ENCODE measurements at regions of chr3 and their contacts with region 1.

Region 1: GRCh38 chr3:122324871-122325323 is at the start of gene CSTA:
- DNase-seq: no peak
- ATAC-seq: no peak
- H3K4me3 ChIP-seq: no peak within 1 kb of the TSS
- H3K27ac ChIP-seq: no peak within 1 kb of the TSS
- H3K4me1 ChIP-seq: no peaks in the 10 kb centered on the region
- H3K27me3 ChIP-seq: no peaks in the 10 kb centered on the region
- CTCF ChIP-seq: no peak
- total RNA-seq, gene CSTA: not detected

Region 2: DNA sequence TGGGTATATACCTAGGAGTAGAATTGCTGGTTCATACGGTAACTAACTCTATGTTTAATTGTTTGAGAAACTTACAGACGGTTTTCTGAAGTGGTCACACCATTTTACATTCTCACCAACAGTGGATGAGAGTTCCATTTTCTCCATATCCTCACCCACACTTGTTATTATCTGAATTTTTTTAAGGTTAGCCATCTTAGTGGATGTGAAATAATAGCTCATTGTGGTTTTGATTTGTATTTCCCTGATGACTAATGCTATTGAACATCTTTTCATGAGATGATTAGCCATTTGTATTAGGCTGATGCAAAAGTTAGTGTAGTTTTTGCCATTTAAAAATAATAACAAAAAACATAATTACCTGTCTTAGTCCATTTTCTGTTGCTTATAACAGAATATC is 18.8 kb after region 1 on chr3:
- CTCF ChIA-PET with region 1: interaction called, 10 read pairs
- POLR2A ChIA-PET with region 1: no interaction called
- in situ Hi-C with region 1: no loop called
- intact Hi-C with region 1: no loop called
- DNase-seq: no peak
- ATAC-seq: no peak
- H3K4me3 ChIP-seq: no peak overlapping the region
- H3K27ac ChIP-seq: no peak overlapping the region
- H3K4me1 ChIP-seq: no peaks in the 10 kb centered on the region
- H3K27me3 ChIP-seq: no peaks in the 10 kb centered on the region
- CTCF ChIP-seq: no peak

Region 3: GRCh38 chr3:122365073-122365472 is 40.2 kb after region 1 on chr3:
- CTCF ChIA-PET with region 1: no interaction called
- POLR2A ChIA-PET with region 1: no interaction called
- in situ Hi-C with region 1: no loop called
- intact Hi-C with region 1: loop called (anchors 2 kb)
- DNase-seq: no peak
- ATAC-seq: peak; percentile 5; the same call in 1 of the 2 replicates
- H3K4me3 ChIP-seq: no peak overlapping the region
- H3K27ac ChIP-seq: peak overlapping the region; percentile 68
- H3K4me1 ChIP-seq: peaks cover 31% of the 10 kb centered on the region
- H3K27me3 ChIP-seq: no peaks in the 10 kb centered on the region
- CTCF ChIP-seq: no peak